Activated CD4-positive, alpha-beta T cell treated with anti-CD3 and anti-CD28 coated beads, Interleukin-2, amount 10 ng/mL, durations not matched to agents 24 days and 14 days (primary cell): ENCODE measurements at regions of chr5 and their contacts with region 1.

Region 1: DNA sequence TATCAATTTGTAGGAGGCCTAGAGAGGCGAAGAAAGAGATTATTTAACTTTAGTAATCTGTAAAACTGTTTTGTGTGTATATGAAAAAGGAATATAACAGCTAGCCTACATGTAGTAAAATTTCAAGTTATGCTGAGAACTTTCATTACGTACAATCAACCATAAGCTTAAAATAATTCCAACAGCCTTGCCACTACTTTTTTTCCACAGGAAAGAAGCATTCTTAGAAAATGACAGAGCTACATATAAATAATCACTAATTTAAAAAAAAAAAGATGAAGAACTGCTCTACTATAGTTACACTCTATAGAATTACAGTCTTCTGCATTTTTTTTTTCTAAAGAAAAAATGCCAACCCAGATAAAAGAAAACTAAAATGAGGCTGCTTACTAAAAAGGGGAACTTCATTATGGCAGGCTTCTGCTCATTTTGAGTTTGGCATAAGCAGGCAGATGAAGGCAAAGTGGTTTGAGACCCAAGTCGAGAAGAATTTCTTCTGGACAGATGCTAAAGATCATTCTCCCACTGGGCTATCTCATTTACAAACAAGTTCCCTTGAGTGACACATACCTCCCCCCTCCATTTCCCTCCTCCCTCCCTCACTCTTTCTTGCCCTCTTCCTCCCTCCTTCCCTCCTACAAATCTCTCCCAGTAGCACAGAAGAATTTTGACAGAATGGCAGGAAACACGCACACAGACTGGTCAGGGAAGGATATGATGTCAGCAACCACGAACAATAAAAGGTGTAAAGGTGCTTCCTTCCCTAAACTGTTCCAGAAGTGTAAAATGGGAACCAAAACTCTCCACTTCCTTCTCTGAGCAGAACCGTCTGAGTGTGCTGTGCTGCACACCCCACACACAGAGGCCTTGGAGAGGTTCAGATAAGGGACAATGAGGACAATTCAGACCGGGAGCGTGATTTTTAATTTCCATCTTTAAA is 56.1 kb downstream of the MEF2C start:
- DNase-seq: peak; percentile 55
- H3K4me3 Mint-ChIP-seq: peak overlapping the region; percentile 36
- H3K27ac Mint-ChIP-seq: peak overlapping the region; percentile 35
- H3K4me1 Mint-ChIP-seq: peaks cover 34% of the 10 kb centered on the region
- H3K27me3 Mint-ChIP-seq: peaks cover 15% of the 10 kb centered on the region

Region 2: GRCh38 chr5:88613050-88613449 is 213.9 kb before region 1 on chr5:
- intact Hi-C with region 1: no loop called
- DNase-seq: no peak
- H3K4me3 Mint-ChIP-seq: no peak overlapping the region
- H3K27ac Mint-ChIP-seq: no peak overlapping the region
- H3K4me1 Mint-ChIP-seq: no peaks in the 10 kb centered on the region
- H3K27me3 Mint-ChIP-seq: no peaks in the 10 kb centered on the region

Region 3: DNA sequence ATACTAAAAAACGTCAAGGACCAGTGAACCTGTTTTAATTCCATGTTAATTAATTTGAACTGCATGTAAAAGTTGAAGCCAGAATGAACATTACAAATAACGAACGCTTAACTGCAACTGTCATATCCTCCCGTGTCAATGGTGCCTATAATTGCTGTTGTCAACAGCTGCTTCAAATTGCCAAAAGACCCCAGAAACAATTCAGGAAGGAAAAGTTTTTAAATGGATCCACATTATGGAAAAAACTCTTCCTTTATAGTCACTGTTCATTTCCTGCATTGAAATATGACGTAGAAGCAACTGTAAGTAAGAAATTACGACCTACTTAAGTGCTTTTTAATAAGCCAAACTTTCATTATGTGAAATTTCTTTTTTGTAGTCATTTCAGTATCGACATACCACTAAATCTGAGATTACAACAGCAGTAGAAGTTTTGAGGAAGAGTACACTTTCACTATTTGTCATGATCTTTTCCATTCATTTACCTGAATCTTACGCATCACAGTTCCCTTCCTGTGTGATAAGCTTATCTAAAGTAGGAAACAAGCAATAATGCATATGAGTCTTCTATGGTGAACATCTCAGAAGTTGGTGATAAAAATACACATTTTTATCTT is 18.3 kb after region 1 on chr5:
- intact Hi-C with region 1: loop called (anchors 1 kb)
- DNase-seq: no peak
- H3K4me3 Mint-ChIP-seq: no peak overlapping the region
- H3K27ac Mint-ChIP-seq: no peak overlapping the region
- H3K4me1 Mint-ChIP-seq: peaks cover 4% of the 10 kb centered on the region
- H3K27me3 Mint-ChIP-seq: peaks cover 6% of the 10 kb centered on the region

Region 4: GRCh38 chr5:88860501-88860900 is 33.6 kb after region 1 on chr5:
- intact Hi-C with region 1: no loop called
- DNase-seq: no peak
- H3K4me3 Mint-ChIP-seq: no peak overlapping the region
- H3K27ac Mint-ChIP-seq: no peak overlapping the region
- H3K4me1 Mint-ChIP-seq: no peaks in the 10 kb centered on the region
- H3K27me3 Mint-ChIP-seq: no peaks in the 10 kb centered on the region